ENCODE measurements at regions of chr12 and their contacts with region 1.

Region 1: DNA sequence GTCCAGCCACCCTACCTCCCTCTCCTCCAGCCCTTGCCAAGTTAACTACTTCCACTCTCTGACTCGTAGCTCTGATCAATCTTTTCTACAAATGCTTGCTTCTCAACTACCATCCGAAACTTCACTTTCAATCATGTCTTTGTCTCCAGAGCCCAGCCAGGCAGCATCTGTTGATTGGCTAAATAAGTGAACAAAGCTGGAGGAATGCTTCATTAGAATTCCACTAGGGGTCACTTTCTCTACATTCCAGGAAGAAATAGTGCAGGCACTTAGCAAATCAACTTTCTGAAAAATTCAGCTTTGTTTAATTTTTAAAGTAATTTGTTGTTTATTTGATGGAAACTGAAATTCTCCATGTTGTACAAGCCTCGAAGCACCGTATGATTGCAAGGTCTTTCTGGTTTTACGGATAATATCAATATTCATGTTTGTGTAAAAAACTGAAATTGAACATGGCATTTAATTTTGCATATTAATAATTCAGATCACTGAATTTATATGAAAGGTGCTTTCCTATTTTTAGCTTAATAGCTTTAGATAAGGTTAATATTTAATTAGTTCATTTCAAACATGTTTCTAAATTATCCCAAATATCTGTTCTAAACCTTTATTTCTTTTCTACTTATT is 32.4 kb upstream of the HELB start:
- DNase-seq: peak; percentile 50
- ATAC-seq: peak; percentile 84
- H3K4me3 Mint-ChIP-seq: no peak overlapping the region
- H3K27ac Mint-ChIP-seq: no peak overlapping the region
- H3K4me1 Mint-ChIP-seq: peaks cover 4% of the 10 kb centered on the region
- H3K27me3 Mint-ChIP-seq: no peaks in the 10 kb centered on the region

Region 2: DNA sequence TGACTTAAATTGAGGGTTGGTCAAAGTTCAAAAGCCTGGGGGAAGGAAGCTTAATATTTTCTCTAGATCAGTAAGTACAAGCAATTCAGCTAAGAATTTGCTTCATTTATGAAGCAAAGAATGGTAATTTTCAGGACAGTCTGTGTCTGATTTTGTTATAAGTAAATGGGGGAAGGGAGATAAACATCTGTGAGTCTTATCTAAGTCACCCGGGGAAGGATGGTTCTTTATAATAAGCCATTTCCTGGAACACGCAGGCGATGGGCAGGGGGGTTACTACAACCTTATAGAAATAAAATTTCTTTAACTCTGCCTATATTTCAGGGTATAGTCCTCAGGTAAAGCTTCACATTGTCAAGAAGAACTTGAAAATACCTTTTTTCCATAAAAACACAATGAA is 75.3 kb after region 1 on chr12:
- CTCF ChIA-PET with region 1: no interaction called
- POLR2A ChIA-PET with region 1: no interaction called
- intact Hi-C with region 1: loop called in 1 of 2 experiments (anchors 10 kb)
- DNase-seq: no peak
- ATAC-seq: no peak
- H3K4me3 Mint-ChIP-seq: no peak overlapping the region
- H3K27ac Mint-ChIP-seq: peak overlapping the region; percentile 80
- H3K4me1 Mint-ChIP-seq: peaks cover 34% of the 10 kb centered on the region
- H3K27me3 Mint-ChIP-seq: no peaks in the 10 kb centered on the region

Region 3: DNA sequence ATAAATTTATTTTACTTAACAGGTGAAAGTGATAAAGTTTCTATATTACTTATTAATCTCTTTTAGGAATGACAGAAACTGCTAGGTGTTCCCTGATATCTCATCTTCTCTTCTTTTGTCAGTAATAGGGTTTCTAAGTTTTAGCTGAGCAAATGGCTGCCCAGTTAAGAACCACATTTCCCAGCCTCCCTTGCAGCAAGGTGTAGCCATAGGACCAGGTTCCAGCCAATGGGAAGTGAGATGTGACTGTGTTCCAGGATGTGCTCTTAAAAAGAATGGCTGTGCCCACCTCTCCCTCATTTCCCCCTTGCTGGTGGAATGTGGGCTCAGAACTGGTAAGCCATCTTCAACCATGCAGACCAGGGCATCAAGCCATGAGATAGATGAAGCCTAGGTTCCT is 198.1 kb after region 1 on chr12:
- CTCF ChIA-PET with region 1: no interaction called
- POLR2A ChIA-PET with region 1: no interaction called
- intact Hi-C with region 1: no loop called
- DNase-seq: no peak
- ATAC-seq: peak; percentile 47
- H3K4me3 Mint-ChIP-seq: no peak overlapping the region
- H3K27ac Mint-ChIP-seq: no peak overlapping the region
- H3K4me1 Mint-ChIP-seq: no peaks in the 10 kb centered on the region
- H3K27me3 Mint-ChIP-seq: peaks cover 8% of the 10 kb centered on the region

Region 4: GRCh38 chr12:66708704-66709456 is 439.0 kb after region 1 on chr12:
- CTCF ChIA-PET with region 1: no interaction called
- POLR2A ChIA-PET with region 1: no interaction called
- intact Hi-C with region 1: loop called in 1 of 2 experiments (anchors 5 kb)
- DNase-seq: no peak
- ATAC-seq: peak; percentile 33
- H3K4me3 Mint-ChIP-seq: no peak overlapping the region
- H3K27ac Mint-ChIP-seq: no peak overlapping the region
- H3K4me1 Mint-ChIP-seq: peaks cover 23% of the 10 kb centered on the region
- H3K27me3 Mint-ChIP-seq: peaks cover 2% of the 10 kb centered on the region

Measured in activated CD4-positive, alpha-beta T cell treated with anti-CD3 and anti-CD28 coated beads for 36 hours (primary cell).